ENCODE measurements at regions of chr6 and their contacts with region 1.

Region 1: DNA sequence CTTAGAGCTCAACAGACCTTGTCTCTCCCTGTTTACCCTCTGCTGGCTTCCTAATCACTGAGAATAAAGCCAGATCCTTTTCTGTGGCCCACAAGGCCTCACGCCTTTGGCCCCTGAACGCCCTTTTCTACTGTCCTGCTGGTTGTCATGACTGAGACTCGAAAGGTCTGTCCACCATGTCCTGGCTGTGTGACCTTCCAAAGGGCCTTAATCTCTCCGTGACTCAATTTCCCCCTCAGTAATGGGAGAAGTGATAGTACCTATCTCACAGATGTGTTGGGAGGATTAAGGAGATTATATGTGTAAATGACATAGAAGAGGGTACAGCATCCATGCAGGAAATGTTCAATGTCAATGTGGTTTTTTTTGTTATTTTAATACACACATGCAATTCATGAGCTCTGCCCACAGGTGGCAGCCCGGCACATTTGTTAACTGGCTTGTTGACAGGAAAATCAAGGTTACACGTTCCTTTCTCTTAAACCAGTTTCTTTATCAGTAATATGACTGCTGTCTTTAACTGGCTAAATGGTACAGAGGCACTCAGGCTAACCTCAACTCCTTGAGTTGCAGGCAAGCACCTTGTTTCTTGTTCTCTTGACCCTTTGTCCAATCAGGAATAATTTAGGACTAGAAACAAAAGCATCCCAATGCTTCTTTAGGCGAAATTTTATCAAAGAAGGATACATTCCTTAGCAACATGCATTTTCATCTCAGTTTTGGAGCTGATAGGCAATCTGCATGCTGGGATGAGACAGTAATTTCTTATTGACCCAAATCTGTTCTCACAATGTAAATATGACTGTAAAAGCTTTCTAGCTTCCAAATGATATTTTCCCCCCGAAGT is 16.6 kb downstream of the SLC22A1 start:
- DNase-seq: peak in 1 of 2 donors; percentile 71
- H3K4me3 ChIP-seq: no peak overlapping the region
- H3K27ac ChIP-seq: peak overlapping the region; percentile 90 to 91
- H3K4me1 ChIP-seq: peaks cover 18 to 34% of the 10 kb centered on the region in 2 donors
- H3K27me3 ChIP-seq: no peaks in the 10 kb centered on the region
- CTCF ChIP-seq: peak; percentile 66 to 75 (median 66)

Region 2: GRCh38 chr6:159829526-159829925 is 308.7 kb before region 1 on chr6:
- intact Hi-C with region 1: no loop called
- DNase-seq: no peak
- H3K4me3 ChIP-seq: no peak overlapping the region
- H3K27ac ChIP-seq: no peak overlapping the region
- H3K4me1 ChIP-seq: peaks cover 0 to 10% of the 10 kb centered on the region in 2 donors
- H3K27me3 ChIP-seq: no peaks in the 10 kb centered on the region
- CTCF ChIP-seq: no peak

Region 3: GRCh38 chr6:160030103-160030502 is 108.1 kb before region 1 on chr6:
- intact Hi-C with region 1: no loop called
- DNase-seq: peak in 1 of 2 donors; percentile 90
- H3K4me3 ChIP-seq: no peak overlapping the region
- H3K27ac ChIP-seq: peak overlapping the region; percentile 60 to 68
- H3K4me1 ChIP-seq: peaks cover 0 to 9% of the 10 kb centered on the region in 2 donors
- H3K27me3 ChIP-seq: no peaks in the 10 kb centered on the region
- CTCF ChIP-seq: no peak

Region 4: DNA sequence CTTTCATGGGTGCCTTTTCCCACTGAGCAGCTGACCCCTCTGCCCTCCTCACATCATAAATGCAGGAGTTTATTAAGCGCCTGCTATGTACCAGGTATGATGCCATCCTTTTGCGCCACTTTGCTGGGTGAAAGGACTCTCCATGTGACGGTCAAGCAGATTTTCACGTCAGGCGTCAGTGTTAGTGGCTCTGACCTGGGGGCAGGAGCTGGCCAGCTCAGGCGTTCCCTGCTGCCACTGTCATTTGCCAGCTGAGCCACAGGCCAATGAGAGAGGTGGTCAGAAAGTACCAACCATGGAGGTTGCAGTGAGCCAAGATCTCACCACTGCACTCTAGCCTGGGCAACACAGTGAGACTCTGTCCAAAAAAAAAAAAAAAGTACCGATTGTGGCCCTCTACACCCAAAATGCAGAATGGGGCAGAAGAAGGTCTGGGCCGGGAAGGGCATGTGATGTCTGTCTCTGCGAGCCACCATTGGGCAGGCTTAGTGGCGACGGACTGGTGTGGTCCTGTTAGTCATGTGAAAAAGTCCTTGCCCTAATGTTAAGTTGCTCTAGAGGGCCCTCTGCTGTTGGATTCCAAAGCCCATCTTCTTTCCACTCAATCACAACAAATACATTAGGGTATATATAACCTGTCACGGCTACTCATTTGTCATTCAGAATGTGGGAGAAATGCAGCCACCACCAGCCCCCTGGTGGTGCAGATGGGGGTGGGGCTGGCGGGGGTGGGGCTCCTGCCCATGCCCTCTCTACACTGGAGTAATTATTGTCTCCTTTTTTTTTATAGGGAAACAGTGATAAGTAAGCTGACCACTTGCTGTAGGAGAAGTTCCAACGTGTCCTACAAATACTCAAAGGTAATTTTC is 35.0 kb before region 1 on chr6:
- intact Hi-C with region 1: loop called (anchors 5 kb)
- DNase-seq: peak in 1 of 2 donors; percentile 76
- H3K4me3 ChIP-seq: no peak overlapping the region
- H3K27ac ChIP-seq: peak overlapping the region; percentile 78 to 82
- H3K4me1 ChIP-seq: peaks cover 8 to 22% of the 10 kb centered on the region in 2 donors
- H3K27me3 ChIP-seq: no peaks in the 10 kb centered on the region
- CTCF ChIP-seq: peak in 2 of 3 experiments; percentile 40 to 47

Region 5: GRCh38 chr6:160221423-160221822 is 83.2 kb after region 1 on chr6:
- intact Hi-C with region 1: loop called (anchors 2 kb)
- DNase-seq: no peak
- H3K4me3 ChIP-seq: no peak overlapping the region
- H3K27ac ChIP-seq: no peak overlapping the region
- H3K4me1 ChIP-seq: peaks cover 0 to 11% of the 10 kb centered on the region in 2 donors
- H3K27me3 ChIP-seq: no peaks in the 10 kb centered on the region
- CTCF ChIP-seq: peak in 1 of 3 experiments; percentile 9

Region 6: GRCh38 chr6:160238751-160239402 is 100.7 kb after region 1 on chr6:
- intact Hi-C with region 1: loop called (anchors 5 kb)
- DNase-seq: no peak
- H3K4me3 ChIP-seq: no peak overlapping the region
- H3K27ac ChIP-seq: peak overlapping the region in 1 of 2 donors; percentile 79
- H3K4me1 ChIP-seq: peaks cover 5 to 13% of the 10 kb centered on the region in 2 donors
- H3K27me3 ChIP-seq: no peaks in the 10 kb centered on the region
- CTCF ChIP-seq: no peak

Region 7: DNA sequence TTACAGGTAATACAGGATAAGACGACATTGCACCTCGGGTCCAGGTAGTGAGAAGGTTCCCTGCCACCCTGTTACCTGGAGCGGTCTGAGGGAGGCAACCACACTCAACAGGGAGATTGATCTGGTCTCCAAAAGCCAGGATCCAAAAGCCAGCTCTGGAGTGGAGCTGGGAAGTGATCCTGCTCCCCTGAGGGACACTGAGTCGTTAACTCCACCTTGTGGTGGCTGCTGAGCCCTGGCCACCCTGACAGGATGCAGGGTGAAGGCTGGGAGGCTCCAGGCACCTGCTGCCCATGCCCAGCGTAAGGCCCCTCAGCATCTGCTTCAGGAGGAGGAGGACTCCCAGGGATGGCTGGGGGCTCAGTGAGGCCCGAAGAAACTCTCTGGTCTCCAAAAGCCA is 159.1 kb after region 1 on chr6:
- intact Hi-C with region 1: loop called (anchors 5 kb)
- DNase-seq: no peak
- H3K4me3 ChIP-seq: no peak overlapping the region
- H3K27ac ChIP-seq: no peak overlapping the region
- H3K4me1 ChIP-seq: peaks cover 7 to 36% of the 10 kb centered on the region in 2 donors
- H3K27me3 ChIP-seq: no peaks in the 10 kb centered on the region
- CTCF ChIP-seq: no peak

Measured in ascending aorta (tissue), 2 donors.